ENCODE measurements at regions of chr1 and their contacts with region 1.

Region 1: DNA sequence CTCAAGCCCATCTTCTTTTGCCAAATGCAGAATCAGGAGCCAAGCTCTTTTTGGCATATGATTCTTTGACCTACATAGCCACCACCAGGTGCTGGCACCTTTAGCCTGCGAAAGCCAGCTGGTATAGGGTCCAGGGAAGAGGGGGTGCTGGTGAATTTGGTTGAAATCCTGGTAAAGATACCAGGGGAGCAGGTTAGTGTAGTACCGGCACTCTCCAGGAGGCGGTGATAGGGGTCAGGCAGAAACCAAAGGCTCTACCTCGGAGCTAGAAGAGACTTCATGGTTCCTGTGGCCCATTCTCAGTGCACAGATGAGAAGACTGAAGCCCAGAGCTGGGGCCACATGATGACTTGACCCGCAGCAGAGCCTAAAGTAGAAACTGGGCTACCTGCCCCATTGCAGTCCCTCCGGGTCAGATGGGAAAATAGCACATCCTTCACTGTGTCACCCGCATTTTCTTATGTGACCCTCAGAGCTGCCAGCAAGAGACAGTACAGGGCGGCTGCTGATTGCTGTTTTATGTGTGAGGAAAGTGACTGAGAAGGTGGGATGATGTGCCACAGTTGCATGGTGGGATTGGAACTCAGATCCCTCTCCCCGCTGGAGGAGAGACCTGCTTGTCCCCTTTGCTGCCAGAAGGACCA is 36.0 kb upstream of the IL19 start:
- DNase-seq: peak in 4 of 10 donors; percentile 32 to 65 (median 50)

Region 2: DNA sequence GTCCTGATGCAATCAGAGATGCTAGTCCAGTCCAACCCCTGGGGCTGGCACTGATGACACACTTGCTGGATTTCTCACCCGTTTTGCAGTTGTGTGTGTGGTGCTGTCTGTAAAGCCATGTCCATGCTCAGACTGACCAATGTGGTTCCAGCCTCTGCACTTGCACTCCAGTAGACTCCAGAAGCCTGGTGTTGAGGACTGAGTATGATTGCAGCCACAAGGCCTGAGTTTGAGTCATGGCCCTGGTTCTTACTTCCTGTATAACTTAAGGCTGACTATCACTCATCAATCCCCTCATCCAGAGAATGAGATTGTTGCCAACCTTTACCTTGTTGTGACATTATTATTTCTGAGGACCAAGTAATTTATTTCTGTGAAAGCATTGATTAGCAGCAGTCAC is 299.2 kb before region 1 on chr1:
- intact Hi-C with region 1: no loop called
- DNase-seq: no peak

Region 3: GRCh38 chr1:206684478-206685333 is 49.9 kb before region 1 on chr1 and contains the start of gene MAPKAPK2:
- intact Hi-C with region 1: no loop called
- DNase-seq: peak; percentile 63 to 97 (median 73)

Region 4: DNA sequence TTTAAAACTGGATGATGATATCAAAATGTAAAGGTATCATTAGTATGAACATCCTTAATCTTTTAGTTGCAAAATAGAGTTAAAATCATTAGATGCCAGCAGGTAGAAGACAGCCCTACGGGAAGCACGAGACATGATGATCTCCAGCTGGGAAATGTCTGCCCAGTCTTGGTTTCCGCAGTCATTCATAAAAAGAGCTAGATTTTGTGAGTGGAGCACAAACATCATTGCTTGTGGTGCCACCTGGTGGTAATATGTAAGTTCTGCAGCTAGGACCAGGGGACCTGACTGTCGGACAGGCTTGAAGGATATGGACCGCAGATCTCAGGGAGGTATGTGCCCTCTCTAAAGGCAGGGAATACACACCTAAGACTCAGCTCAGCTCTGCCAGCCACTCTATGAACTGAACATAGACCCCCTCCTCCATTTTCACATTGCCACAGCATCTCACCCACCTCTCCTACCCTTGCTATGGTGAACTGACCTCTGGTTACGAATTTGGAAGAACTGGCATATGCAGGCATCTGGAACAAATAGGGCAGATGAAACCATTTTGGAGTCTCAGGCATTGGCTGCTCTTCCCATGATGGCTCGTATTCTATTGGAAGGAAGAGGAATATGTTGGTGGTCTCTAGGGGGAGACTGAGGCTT is 177.9 kb after region 1 on chr1:
- intact Hi-C with region 1: loop called (anchors 2 kb)
- DNase-seq: peak in 8 of 10 donors; percentile 60 to 93 (median 74)

Region 5: GRCh38 chr1:206982216-206982615 is 247.6 kb after region 1 on chr1:
- intact Hi-C with region 1: loop called (anchors 5 kb)
- DNase-seq: peak in 8 of 10 donors; percentile 16 to 93 (median 66)